GM13976 (cell line): ENCODE measurements at regions of chr3 and their contacts with region 1.

Region 1: GRCh38 chr3:197600796-197601565 is 45.2 kb upstream of the BDH1 start:
- DNase-seq: peak; percentile 11
- CTCF ChIP-seq: no peak

Region 2: DNA sequence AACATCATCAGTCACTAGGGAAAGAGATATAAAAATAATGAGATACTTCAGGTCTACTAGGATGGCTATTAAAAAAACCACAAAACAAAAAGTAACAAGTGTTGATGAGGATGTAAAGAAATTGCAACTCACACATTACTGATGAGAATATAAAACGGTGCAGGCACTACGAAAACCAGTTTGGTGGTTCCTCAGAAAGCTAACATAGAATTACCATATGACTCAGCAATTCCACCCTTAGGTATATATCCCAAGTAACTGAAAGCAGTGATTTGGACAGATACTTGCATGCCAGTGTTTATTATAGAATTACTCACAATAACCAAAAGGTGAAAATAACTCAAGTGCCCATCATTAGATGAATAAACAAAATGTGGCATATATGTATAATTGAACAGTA is 483.9 kb before region 1 on chr3:
- in situ Hi-C with region 1: no loop called
- DNase-seq: no peak
- CTCF ChIP-seq: no peak

Region 3: GRCh38 chr3:197327701-197328100 is 273.3 kb before region 1 on chr3:
- in situ Hi-C with region 1: no loop called
- DNase-seq: no peak
- CTCF ChIP-seq: no peak

Region 4: DNA sequence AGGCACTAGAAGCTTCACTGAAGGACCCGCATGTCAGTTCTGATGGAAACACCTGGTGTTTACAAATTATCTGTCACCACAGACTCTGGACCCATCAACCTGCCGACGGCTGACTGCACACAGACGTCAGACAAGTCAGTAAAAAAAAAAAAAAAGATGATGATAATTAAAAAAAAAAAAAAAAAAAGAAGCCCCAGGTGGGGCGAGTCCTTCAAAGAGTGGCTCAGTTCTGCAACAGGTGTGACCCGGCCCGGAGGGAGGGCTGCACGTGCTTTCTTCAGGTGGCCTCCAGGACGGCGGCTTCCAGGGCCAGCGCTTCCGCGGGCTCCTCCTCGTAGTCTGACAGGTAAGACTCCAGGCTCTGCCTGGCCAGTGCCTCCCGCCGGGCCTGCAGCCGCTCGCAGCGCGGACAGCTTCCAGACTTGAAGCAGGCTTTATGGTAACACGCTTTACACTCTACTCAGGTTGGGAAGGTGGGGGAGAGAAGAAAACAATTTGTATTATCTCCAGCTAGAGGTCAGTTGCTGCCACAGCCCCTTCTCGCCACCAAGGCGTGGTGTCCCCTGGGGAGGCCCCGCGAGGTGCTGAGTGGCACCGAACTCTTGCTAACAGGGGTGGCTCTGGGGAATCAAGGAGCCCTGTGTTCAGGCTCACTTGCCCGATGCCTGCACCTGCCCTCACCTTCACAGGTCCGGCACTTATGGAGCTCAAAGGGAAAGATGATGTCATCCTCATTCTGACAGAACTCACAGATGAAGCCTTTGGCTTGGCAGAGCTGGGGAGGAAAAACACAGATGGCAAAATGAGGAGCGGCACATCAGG is 74.0 kb after region 1 on chr3:
- in situ Hi-C with region 1: loop called (anchors 10 kb)
- DNase-seq: peak; percentile 26
- CTCF ChIP-seq: no peak

Region 5: GRCh38 chr3:197994736-197995135 is 393.8 kb after region 1 on chr3:
- in situ Hi-C with region 1: no loop called
- DNase-seq: no peak
- CTCF ChIP-seq: no peak